ENCODE measurements at regions of chr16 and their contacts with region 1.

Region 1: GRCh38 chr16:67198238-67198734 is 645 bp upstream of the ELMO3 start:
- DNase-seq: peak; percentile 64
- ATAC-seq: peak; percentile 67
- H3K4me3 ChIP-seq: peak overlapping the region; percentile 78
- H3K27ac ChIP-seq: peak overlapping the region; percentile 99
- H3K4me1 ChIP-seq: peaks cover 19 to 42% of the 10 kb centered on the region in 2 experiments
- H3K27me3 ChIP-seq: no peaks in the 10 kb centered on the region
- CTCF ChIP-seq: peak in 2 of 3 experiments; percentile 98; a peak in 4 of 6 replicates
- POLR2A ChIP-seq: no peak
- RAD21 ChIP-seq: no peak

Region 2: DNA sequence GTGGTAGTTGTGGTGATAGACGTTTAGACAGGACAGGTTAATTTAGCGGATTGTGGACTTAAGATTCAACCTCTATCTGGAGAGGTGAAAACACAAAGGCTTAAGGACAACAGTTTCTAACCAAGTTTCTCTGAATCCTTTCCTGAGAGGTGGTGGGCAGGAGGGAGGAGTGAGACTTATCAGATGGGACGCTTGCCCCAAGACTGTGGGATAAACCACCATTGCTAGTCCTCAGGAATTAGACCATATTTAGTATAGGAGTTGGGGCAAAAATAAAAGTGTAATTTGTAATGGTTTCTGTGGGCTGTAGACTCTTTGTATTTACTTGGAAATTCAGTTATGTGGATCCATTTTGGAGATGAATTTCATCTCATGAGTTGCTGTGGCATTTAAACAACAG is 311.4 kb before region 1 on chr16:
- CTCF ChIA-PET with region 1: no interaction called
- POLR2A ChIA-PET with region 1: no interaction called
- RAD21 ChIA-PET with region 1: no interaction called
- intact Hi-C with region 1: no loop called
- DNase-seq: no peak
- ATAC-seq: no peak
- H3K4me3 ChIP-seq: no peak overlapping the region
- H3K27ac ChIP-seq: no peak overlapping the region
- H3K4me1 ChIP-seq: peaks cover 0 to 2% of the 10 kb centered on the region in 2 experiments; a peak in 2 of 4 replicates
- H3K27me3 ChIP-seq: no peaks in the 10 kb centered on the region
- CTCF ChIP-seq: no peak
- POLR2A ChIP-seq: no peak
- RAD21 ChIP-seq: no peak

Region 3: DNA sequence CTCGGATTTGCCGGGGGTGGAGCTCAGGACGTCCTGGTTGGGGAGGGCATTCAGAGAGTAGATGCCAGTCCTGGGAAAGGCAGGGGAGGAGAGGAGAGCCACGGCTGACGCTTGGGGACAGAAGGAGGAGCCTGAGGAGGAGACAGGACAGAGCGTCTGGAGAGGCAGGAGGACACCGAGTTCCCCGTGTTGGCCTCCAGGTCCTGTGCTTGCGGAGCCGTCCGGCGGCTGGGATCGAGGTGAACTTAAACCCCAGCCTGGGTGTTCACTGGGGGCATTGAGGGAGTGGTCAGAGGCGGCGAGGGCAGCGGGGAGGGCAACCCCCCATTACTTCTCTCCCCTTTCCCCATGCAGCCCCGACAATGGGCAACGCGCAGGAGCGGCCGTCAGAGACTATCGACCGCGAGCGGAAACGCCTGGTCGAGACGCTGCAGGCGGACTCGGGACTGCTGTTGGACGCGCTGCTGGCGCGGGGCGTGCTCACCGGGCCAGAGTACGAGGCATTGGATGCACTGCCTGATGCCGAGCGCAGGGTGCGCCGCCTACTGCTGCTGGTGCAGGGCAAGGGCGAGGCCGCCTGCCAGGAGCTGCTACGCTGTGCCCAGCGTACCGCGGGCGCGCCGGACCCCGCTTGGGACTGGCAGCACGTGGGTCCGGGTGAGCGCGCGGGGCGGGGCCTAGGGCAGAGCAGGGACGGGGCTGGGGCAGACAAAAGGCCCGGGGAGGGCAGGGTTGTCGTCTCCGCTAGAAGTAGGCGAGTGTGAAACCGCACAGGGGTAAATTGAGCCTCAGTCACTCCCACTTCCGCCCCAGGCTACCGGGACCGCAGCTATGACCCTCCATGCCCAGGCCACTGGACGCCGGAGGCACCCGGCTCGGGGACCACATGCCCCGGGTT is 24.2 kb before region 1 on chr16:
- CTCF ChIA-PET with region 1: interaction called, 14 read pairs
- POLR2A ChIA-PET with region 1: interaction called, 9 read pairs
- RAD21 ChIA-PET with region 1: no interaction called
- intact Hi-C with region 1: no loop called
- DNase-seq: no peak
- ATAC-seq: peak; percentile 63
- H3K4me3 ChIP-seq: peak overlapping the region; percentile 67 to 70
- H3K27ac ChIP-seq: peak overlapping the region; percentile 97
- H3K4me1 ChIP-seq: peaks cover 57 to 90% of the 10 kb centered on the region in 2 experiments
- H3K27me3 ChIP-seq: no peaks in the 10 kb centered on the region
- CTCF ChIP-seq: peak in 1 of 3 experiments; percentile 18; a peak in 2 of 6 replicates
- POLR2A ChIP-seq: no peak
- RAD21 ChIP-seq: no peak

Region 4: DNA sequence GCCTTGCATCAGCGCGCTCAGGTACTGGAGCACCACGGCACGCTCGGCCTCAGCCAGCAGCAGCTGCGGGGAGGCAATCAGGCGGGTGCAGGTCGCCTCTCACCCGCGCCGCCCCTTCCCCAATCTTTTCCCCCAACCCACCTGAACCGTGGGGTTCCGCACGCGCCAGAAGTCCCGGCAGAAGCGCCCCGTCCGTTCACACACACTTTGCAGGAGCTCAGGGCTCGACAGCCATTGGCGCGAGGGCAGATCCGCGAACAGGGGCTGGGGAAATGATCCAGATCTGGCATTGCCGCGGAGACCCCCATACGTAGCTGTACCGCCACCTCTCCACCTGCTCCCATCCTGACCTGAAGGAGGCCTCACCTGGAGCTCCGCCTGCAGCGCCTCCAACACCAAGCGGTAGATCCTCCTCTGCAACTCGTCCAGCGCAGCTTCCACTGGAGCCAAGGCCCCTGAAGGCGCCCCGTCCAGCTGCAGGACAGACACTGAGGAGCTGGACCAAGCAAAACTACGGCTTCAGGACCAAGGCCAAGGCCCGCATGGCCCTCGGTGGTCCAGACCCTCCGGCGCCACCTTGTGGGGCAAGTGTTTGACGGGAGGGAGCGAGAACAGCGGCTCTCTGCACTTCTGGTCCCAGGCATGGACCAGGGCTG is 13.2 kb before region 1 on chr16:
- CTCF ChIA-PET with region 1: interaction called, 12 read pairs
- POLR2A ChIA-PET with region 1: no interaction called
- RAD21 ChIA-PET with region 1: no interaction called
- intact Hi-C with region 1: no loop called
- DNase-seq: peak; percentile 67
- ATAC-seq: peak; percentile 61
- H3K4me3 ChIP-seq: no peak overlapping the region
- H3K27ac ChIP-seq: no peak overlapping the region; the same call in 1 of the 2 replicates
- H3K4me1 ChIP-seq: peaks cover 10 to 43% of the 10 kb centered on the region in 2 experiments; a peak in 3 of 4 replicates
- H3K27me3 ChIP-seq: no peaks in the 10 kb centered on the region
- CTCF ChIP-seq: peak in 2 of 3 experiments; percentile 80; a peak in 4 of 6 replicates
- POLR2A ChIP-seq: no peak
- RAD21 ChIP-seq: no peak

Region 5: GRCh38 chr16:67212766-67213165 is 14.5 kb after region 1 on chr16:
- CTCF ChIA-PET with region 1: interaction called, 13 read pairs
- POLR2A ChIA-PET with region 1: interaction called, 5 read pairs
- RAD21 ChIA-PET with region 1: no interaction called
- intact Hi-C with region 1: no loop called
- DNase-seq: no peak
- ATAC-seq: no peak
- H3K4me3 ChIP-seq: no peak overlapping the region
- H3K27ac ChIP-seq: no peak overlapping the region
- H3K4me1 ChIP-seq: peaks cover 5 to 18% of the 10 kb centered on the region in 2 experiments
- H3K27me3 ChIP-seq: no peaks in the 10 kb centered on the region
- CTCF ChIP-seq: no peak
- POLR2A ChIP-seq: no peak
- RAD21 ChIP-seq: no peak